BJ (cell line): ENCODE measurements at regions of chr15 and their contacts with region 1.

Region 1: GRCh38 chr15:65275728-65276126 is 11.0 kb downstream of the PARP16 start:
- DNase-seq: no peak
- H3K4me3 ChIP-seq: no peak overlapping the region
- H3K27me3 ChIP-seq: no peaks in the 10 kb centered on the region
- CTCF ChIP-seq: no peak

Region 2: GRCh38 chr15:65209701-65210618 is 65.8 kb before region 1 on chr15:
- CTCF ChIA-PET with region 1: interaction called, 17 read pairs
- POLR2A ChIA-PET with region 1: no interaction called
- DNase-seq: no peak
- H3K4me3 ChIP-seq: no peak overlapping the region
- H3K27me3 ChIP-seq: peaks cover 3% of the 10 kb centered on the region
- CTCF ChIP-seq: no peak

Region 3: GRCh38 chr15:65258375-65259262 is 17.1 kb before region 1 on chr15:
- CTCF ChIA-PET with region 1: interaction called, 41 read pairs
- POLR2A ChIA-PET with region 1: no interaction called
- DNase-seq: peak; percentile 34
- H3K4me3 ChIP-seq: no peak overlapping the region
- H3K27me3 ChIP-seq: no peaks in the 10 kb centered on the region
- CTCF ChIP-seq: no peak

Region 4: DNA sequence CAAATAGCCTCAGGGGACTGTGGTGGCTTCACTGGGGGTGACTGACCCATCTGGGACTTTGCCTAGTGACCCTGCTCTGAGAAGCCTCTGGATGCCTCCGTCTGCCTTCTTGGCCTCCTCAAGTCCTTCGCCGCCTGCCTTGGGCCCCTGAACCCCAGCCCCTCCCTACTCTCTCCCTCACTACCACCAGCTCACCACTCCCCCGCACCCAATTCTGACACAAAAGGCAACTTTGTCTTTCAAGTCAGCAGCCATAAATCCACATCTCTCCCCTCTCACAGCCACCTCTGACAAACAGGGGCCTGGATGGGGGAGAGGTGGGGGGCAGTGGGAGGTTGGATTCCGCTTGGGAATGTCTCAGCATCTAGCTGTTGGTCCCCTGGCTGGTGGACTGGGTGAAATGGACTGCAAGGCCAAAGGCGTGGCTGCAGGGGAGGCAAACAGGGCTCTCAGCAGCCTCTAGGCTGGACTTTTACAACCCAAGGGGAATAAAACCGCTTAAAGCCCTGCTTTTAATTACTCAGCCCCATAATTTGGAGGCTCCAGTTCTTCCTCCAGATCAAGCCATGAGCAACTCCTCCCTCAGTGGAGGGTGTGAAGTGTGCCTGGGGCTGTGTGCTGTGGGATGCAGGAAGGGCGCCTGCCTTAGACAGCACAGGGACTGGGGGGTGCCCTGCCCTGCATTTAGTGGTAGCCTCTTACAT is 68.6 kb after region 1 on chr15:
- CTCF ChIA-PET with region 1: no interaction called
- POLR2A ChIA-PET with region 1: no interaction called
- DNase-seq: no peak
- H3K4me3 ChIP-seq: no peak overlapping the region
- H3K27me3 ChIP-seq: peaks cover 22% of the 10 kb centered on the region
- CTCF ChIP-seq: no peak

Region 5: DNA sequence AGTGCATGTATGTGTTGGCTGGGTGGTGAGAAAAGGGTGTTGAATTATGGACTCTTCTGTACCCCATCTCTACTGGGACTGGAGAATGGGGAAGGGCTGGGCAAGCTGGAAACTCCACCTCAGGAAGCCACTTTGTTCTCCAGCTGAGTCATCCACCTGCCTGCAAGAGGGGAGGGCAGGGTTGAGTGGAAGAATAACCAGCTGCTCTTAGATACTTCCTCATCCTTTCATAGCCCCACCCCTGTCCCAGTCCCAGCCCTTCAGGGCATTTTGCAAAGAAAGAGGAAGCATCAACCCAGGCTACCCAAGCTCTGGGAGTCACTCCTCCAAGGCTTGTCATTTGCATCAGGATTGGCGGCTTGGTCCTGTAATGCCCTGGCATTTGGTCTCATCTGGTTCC is 626.7 kb after region 1 on chr15:
- CTCF ChIA-PET with region 1: no interaction called
- POLR2A ChIA-PET with region 1: no interaction called
- DNase-seq: no peak
- H3K4me3 ChIP-seq: no peak overlapping the region
- H3K27me3 ChIP-seq: no peaks in the 10 kb centered on the region
- CTCF ChIP-seq: no peak